Naive thymus-derived CD8-positive, alpha-beta T cell (primary cell): ENCODE measurements at regions of chr3 and their contacts with region 1.

Region 1: DNA sequence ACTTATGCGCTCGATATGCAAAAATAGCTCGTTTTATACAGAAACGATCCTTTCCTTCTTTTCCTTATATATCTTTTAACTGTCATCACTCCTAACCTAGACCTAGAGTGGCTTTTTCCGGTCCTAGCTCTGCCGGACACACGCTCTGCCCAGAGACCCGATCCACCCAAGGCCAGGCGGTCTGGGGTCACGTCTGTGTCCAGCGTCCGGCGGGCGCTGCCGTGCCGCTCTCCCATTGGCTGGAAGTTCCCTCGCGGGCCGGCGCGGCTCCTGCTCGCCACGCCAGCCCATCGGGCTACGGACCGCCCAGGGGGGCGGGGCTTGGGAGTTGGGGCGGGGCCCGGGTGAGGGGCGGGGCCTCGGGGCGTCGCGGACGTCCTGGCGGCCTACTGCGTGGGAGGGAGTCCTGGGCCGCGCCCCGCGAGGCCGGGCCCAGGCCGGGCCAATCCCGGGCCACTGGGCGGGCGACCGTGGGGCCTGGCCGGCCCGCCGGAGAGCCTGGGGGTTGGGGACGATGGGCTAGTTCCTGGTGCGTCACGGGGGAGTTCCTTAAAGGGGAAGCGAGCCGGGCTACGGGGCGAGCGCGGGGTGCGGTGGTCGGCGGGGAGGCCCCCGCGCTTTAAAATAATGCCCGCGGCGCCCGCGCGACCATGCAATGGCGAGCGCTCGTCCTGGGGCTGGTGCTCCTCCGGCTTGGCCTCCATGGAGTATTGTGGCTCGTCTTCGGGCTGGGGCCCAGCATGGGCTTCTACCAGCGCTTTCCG is at the start of gene EDEM1:
- DNase-seq: peak; percentile 85 to 95 (median 90)
- ATAC-seq: peak; percentile 85
- H3K4me3 Mint-ChIP-seq: peak within 1 kb of the TSS; percentile 91 to 100 (median 98)
- H3K27ac Mint-ChIP-seq: peak within 1 kb of the TSS; percentile 95 to 100 (median 99)
- H3K4me1 Mint-ChIP-seq: peaks cover 26 to 58% (median 45%) of the 10 kb centered on the region in 4 donors
- H3K27me3 Mint-ChIP-seq: no peaks in the 10 kb centered on the region
- polyA plus RNA-seq, gene EDEM1: 25.5 to 31.0 (median 26.0) TPM

Region 2: GRCh38 chr3:5122741-5123183 is 64.6 kb before region 1 on chr3:
- POLR2A ChIA-PET with region 1: interaction called, 10 read pairs
- DNase-seq: peak in 7 of 10 donors; percentile 6 to 31 (median 19)
- ATAC-seq: peak; percentile 4
- H3K4me3 Mint-ChIP-seq: peak overlapping the region; percentile 76 to 96 (median 91)
- H3K27ac Mint-ChIP-seq: peak overlapping the region; percentile 84 to 95 (median 90)
- H3K4me1 Mint-ChIP-seq: peaks cover 23 to 50% (median 47%) of the 10 kb centered on the region in 4 donors
- H3K27me3 Mint-ChIP-seq: no peaks in the 10 kb centered on the region

Region 3: DNA sequence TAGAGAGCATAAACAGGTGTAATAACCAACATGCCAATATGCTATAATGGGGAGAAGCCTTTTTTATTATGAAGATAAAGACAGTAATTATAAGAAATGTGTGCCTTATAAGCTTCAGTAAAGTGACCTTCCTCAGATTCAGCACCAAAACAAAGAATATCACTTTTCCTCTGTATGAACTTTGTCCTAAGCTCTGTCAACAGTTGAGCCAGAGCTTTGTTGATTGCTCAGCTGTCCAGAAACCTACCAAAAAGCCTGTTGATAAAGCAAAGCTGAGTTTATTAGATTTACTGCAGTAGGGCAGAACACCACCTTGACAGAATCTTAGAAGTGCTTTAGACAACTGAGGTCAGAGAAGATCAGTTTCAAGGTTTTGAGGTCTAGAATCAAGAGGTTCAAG is 635.5 kb after region 1 on chr3:
- POLR2A ChIA-PET with region 1: no interaction called
- DNase-seq: no peak
- ATAC-seq: no peak
- H3K4me3 Mint-ChIP-seq: no peak overlapping the region
- H3K27ac Mint-ChIP-seq: no peak overlapping the region
- H3K4me1 Mint-ChIP-seq: no peaks in the 10 kb centered on the region
- H3K27me3 Mint-ChIP-seq: no peaks in the 10 kb centered on the region